ENCODE measurements at regions of chr4 and their contacts with region 1.

Region 1: GRCh38 chr4:165207431-165208220 is at the start of gene KLHL2:
- DNase-seq: peak; percentile 33 to 83 (median 67)
- ATAC-seq: peak; percentile 74
- H3K4me3 ChIP-seq: peak within 1 kb of the TSS; percentile 83 to 95
- H3K4me3 Mint-ChIP-seq: peak within 1 kb of the TSS; percentile 92
- H3K27ac ChIP-seq: peak within 1 kb of the TSS; percentile 40 to 59
- H3K27ac Mint-ChIP-seq: peak within 1 kb of the TSS; percentile 92
- H3K4me1 ChIP-seq: peaks cover 31% of the 10 kb centered on the region
- H3K4me1 Mint-ChIP-seq: peaks cover 66% of the 10 kb centered on the region
- H3K27me3 ChIP-seq: no peaks in the 10 kb centered on the region
- H3K27me3 Mint-ChIP-seq: no peaks in the 10 kb centered on the region
- CTCF ChIP-seq: no peak
- total RNA-seq, gene KLHL2: 17.5 to 18.4 TPM

Region 2: GRCh38 chr4:165079476-165079875 is 128.2 kb before region 1 on chr4:
- CTCF ChIA-PET with region 1: no interaction called
- POLR2A ChIA-PET with region 1: no interaction called
- intact Hi-C with region 1: no loop called
- DNase-seq: no peak
- ATAC-seq: no peak
- H3K4me3 ChIP-seq: no peak overlapping the region
- H3K4me3 Mint-ChIP-seq: no peak overlapping the region
- H3K27ac ChIP-seq: no peak overlapping the region
- H3K27ac Mint-ChIP-seq: no peak overlapping the region
- H3K4me1 ChIP-seq: no peaks in the 10 kb centered on the region
- H3K4me1 Mint-ChIP-seq: no peaks in the 10 kb centered on the region
- H3K27me3 ChIP-seq: no peaks in the 10 kb centered on the region
- H3K27me3 Mint-ChIP-seq: no peaks in the 10 kb centered on the region
- CTCF ChIP-seq: no peak

Region 3: DNA sequence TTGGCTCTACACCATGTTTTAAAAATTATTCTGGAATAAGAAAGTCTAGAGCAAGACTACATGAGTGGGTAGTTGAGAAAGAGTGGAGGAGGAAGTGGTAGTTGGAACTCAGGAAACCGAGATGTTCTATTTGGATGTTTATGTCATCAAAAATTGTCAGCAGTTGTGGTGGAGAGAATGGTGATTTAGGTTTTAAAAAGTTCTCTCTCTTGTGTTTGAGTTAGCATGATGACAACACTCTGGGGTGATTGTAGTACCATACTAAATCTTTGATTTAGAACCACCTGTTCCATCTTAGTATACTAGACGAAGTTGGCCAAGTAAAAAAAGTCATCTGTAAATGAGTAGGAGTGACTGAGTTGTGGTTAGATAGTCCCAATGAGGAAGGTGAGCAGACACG is 40.5 kb after region 1 on chr4:
- CTCF ChIA-PET with region 1: interaction called, 3 read pairs
- POLR2A ChIA-PET with region 1: no interaction called
- intact Hi-C with region 1: loop called in 1 of 2 experiments (anchors 10 kb)
- DNase-seq: peak in 1 of 9 experiments; percentile 5
- ATAC-seq: peak; percentile 29
- H3K4me3 ChIP-seq: no peak overlapping the region
- H3K4me3 Mint-ChIP-seq: no peak overlapping the region
- H3K27ac ChIP-seq: no peak overlapping the region
- H3K27ac Mint-ChIP-seq: no peak overlapping the region
- H3K4me1 ChIP-seq: peaks cover 16% of the 10 kb centered on the region
- H3K4me1 Mint-ChIP-seq: peaks cover 11% of the 10 kb centered on the region
- H3K27me3 ChIP-seq: no peaks in the 10 kb centered on the region
- H3K27me3 Mint-ChIP-seq: no peaks in the 10 kb centered on the region
- CTCF ChIP-seq: no peak

Region 4: GRCh38 chr4:165327211-165328100 is 119.8 kb after region 1 on chr4 and contains the start of gene MSMO1:
- CTCF ChIA-PET with region 1: no interaction called
- POLR2A ChIA-PET with region 1: interaction called, 3 read pairs
- intact Hi-C with region 1: loop called (anchors 1 to 2 kb)
- DNase-seq: peak; percentile 95 to 99 (median 98)
- ATAC-seq: peak; percentile 95
- H3K4me3 ChIP-seq: peak within 1 kb of the TSS; percentile 64 to 92
- H3K4me3 Mint-ChIP-seq: no peak within 1 kb of the TSS
- H3K27ac ChIP-seq: peak within 1 kb of the TSS; percentile 84 to 87
- H3K27ac Mint-ChIP-seq: no peak within 1 kb of the TSS
- H3K4me1 ChIP-seq: peaks cover 21% of the 10 kb centered on the region
- H3K4me1 Mint-ChIP-seq: peaks cover 37% of the 10 kb centered on the region
- H3K27me3 ChIP-seq: no peaks in the 10 kb centered on the region
- H3K27me3 Mint-ChIP-seq: no peaks in the 10 kb centered on the region
- CTCF ChIP-seq: no peak
- total RNA-seq, gene MSMO1: 18.6 to 19.2 TPM

Region 5: GRCh38 chr4:165537028-165537648 is 329.5 kb after region 1 on chr4:
- CTCF ChIA-PET with region 1: no interaction called
- POLR2A ChIA-PET with region 1: no interaction called
- intact Hi-C with region 1: no loop called
- DNase-seq: peak in 2 of 9 experiments; percentile 35 to 38
- ATAC-seq: no peak
- H3K4me3 ChIP-seq: no peak overlapping the region
- H3K4me3 Mint-ChIP-seq: no peak overlapping the region
- H3K27ac ChIP-seq: no peak overlapping the region
- H3K27ac Mint-ChIP-seq: no peak overlapping the region
- H3K4me1 ChIP-seq: no peaks in the 10 kb centered on the region
- H3K4me1 Mint-ChIP-seq: no peaks in the 10 kb centered on the region
- H3K27me3 ChIP-seq: no peaks in the 10 kb centered on the region
- H3K27me3 Mint-ChIP-seq: peaks cover 9% of the 10 kb centered on the region
- CTCF ChIP-seq: peak; percentile 80

Measured in CD8-positive, alpha-beta T cell (primary cell).